ENCODE measurements at regions of chr17 and their contacts with region 1.

Region 1: DNA sequence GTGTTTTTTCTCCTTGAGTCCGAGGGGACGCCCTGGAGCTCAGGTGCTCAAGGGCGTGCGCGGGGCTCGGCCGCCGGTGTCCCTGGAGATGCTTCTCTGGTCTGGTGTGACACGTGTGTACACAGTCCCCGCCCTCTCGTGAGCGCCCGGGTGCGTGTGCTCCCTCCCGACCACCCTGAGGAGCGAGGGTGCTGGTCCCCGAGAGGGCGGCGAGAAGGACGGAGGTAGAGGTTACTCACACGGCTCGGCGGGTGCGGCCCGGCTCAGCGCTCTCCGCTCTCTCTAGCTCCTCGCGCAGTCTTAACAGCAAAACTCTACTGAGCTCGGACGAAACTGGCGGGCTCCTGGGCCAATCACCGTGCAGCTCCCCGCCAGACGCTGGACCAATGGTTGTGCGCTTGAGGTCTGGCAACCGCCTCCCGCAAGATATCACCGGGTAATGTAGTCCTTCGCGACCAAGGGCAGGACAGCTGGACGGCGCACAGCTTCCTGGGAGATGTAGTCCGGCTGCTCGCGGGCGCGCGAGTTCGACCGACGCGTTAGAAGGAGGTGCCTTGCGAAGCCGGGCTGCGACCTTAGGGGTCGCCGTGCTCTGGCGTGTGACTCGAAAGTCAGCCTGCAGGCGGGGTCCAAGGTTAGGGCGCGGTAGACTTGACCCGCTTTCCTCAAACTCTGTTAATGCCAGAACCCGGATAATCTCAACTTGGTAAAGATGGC is at the start of gene SLC25A19:
- DNase-seq: peak; percentile 99
- H3K4me3 Mint-ChIP-seq: peak within 1 kb of the TSS; percentile 96
- H3K27ac Mint-ChIP-seq: peak within 1 kb of the TSS; percentile 100
- H3K4me1 Mint-ChIP-seq: peaks cover 21% of the 10 kb centered on the region
- H3K27me3 Mint-ChIP-seq: no peaks in the 10 kb centered on the region
- total RNA-seq, gene SLC25A19: 57.9 to 62.3 TPM

Region 2: DNA sequence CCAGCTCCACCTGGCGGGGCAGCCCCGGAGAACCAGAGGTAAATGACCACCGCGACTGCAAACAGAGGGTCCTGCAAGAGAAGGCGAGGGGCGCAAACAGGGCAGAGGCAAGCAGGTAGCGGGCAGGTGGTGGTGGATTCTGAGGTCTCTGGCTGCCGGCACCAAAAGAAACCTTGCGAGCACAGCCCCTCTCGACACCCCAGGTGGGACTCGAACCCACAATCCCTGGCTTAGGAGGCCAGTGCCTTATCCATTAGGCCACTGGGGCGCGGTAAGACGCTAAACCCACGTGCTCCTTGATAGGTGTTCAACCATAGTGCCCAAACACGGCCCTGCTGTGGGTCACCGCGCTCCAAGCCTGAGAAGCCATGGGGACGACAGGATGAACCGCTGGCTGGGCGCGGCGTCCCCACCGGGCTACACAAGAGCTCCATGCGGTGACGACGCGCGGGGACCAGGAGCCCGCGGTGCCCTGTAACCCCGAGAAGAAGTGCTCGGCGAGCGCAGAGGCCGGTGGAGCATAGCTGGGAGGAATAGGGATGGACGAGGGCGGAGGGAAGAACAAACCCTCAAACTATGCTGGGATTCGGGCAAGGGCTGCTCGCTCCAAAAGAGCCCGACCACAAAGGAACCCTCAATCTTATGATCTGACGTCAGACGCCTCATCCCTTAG is 254.9 kb before region 1 on chr17:
- CTCF ChIA-PET with region 1: no interaction called
- POLR2A ChIA-PET with region 1: no interaction called
- intact Hi-C with region 1: loop called (anchors 1 kb)
- DNase-seq: peak; percentile 95
- H3K4me3 Mint-ChIP-seq: peak overlapping the region; percentile 97
- H3K27ac Mint-ChIP-seq: peak overlapping the region; percentile 96
- H3K4me1 Mint-ChIP-seq: peaks cover 49% of the 10 kb centered on the region
- H3K27me3 Mint-ChIP-seq: peaks cover 4% of the 10 kb centered on the region

Region 3: DNA sequence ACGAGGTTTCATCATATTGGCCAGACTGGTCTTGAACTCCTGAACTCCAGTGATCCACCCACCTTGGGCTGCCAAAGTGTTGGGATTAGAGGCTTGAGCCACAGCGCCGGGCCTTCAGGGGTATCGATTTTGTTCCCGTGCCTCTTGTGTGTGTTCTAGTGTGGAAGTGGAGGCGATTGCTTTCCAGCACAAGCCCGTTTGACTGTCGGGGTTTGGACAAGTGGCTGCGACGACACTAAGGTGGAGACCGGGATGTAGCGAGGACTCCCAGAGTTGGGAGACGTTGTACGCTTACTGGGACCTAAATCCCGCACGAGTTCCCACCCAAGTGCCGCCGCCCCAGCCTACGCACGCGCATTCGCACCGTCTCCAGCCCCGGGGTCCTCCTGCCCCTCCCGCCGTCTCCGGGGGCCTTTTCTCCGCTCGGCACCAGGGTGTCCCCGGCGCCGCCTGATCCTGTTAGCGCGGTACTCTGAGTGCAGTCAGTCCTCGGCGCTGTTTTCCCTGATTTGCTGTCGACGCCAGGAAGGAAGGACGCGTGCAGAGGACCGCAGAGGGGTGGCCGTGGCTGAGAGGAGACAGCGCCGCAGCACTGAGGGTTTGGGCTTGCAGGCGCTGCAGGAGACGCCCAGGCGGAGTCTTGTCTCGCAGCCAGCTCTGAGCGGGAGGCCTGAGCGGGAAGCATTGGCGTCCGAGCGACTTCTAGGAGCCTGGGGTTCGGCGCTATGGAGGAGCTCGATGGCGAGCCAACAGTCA is 84.1 kb before region 1 on chr17 and contains the start of gene NUP85:
- CTCF ChIA-PET with region 1: no interaction called
- POLR2A ChIA-PET with region 1: no interaction called
- intact Hi-C with region 1: loop called (anchors 1 kb)
- DNase-seq: peak; percentile 95
- H3K4me3 Mint-ChIP-seq: peak within 1 kb of the TSS; percentile 81
- H3K27ac Mint-ChIP-seq: peak within 1 kb of the TSS; percentile 89
- H3K4me1 Mint-ChIP-seq: peaks cover 18% of the 10 kb centered on the region
- H3K27me3 Mint-ChIP-seq: no peaks in the 10 kb centered on the region
- total RNA-seq, gene NUP85: 125 to 132 TPM

Region 4: GRCh38 chr17:75261336-75262111 is 27.7 kb before region 1 on chr17 and contains the starts of genes GGA3 and MRPS7:
- CTCF ChIA-PET with region 1: interaction called, 21 read pairs
- POLR2A ChIA-PET with region 1: interaction called, 35 read pairs
- intact Hi-C with region 1: loop called (anchors 1 kb)
- DNase-seq: peak; percentile 96
- H3K4me3 Mint-ChIP-seq: peak within 1 kb of the TSS; percentile 93
- H3K27ac Mint-ChIP-seq: peak within 1 kb of the TSS; percentile 96
- H3K4me1 Mint-ChIP-seq: peaks cover 49% of the 10 kb centered on the region
- H3K27me3 Mint-ChIP-seq: no peaks in the 10 kb centered on the region
- total RNA-seq, gene GGA3: 68.5 to 70.7 TPM
- total RNA-seq, gene MRPS7: 72.9 to 76.1 TPM

Region 5: DNA sequence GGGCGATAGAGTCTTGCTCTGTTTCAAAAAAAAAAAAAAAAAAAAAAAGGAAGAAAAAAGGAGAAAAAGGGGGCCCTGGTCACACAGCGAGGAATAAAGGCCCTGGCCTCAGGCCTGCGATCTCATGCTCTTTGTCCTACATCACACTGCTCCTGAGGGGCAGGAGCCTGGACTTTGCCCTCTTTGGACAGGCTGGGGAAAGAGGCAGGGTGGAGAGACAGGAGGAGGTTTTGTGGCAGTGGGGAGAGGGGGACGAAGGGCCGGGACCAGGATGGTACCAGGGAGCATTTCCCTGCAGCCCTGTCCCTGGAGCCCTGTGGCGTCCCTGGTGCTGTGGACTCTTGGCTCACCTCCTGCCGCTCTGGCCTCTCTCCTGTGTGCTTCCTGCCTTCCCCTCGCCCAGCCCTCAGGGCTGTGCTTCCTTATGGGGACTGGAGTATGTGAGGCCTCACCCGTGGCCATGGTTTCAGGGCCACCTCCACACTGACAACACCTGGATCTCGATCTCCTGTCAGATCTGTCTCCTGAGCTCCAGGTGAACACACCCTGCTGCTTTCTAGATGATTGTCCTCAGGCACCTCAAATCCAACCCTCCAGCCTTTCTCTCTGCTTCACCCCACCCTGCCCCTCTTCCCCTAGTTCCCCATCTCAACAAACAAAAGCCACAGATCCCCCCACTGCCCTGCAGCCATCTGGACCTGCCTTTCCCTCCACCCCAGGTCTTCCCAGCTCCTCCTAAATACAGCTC is 19.9 kb after region 1 on chr17:
- CTCF ChIA-PET with region 1: no interaction called
- POLR2A ChIA-PET with region 1: no interaction called
- intact Hi-C with region 1: no loop called
- DNase-seq: no peak
- H3K4me3 Mint-ChIP-seq: no peak overlapping the region
- H3K27ac Mint-ChIP-seq: no peak overlapping the region
- H3K4me1 Mint-ChIP-seq: peaks cover 13% of the 10 kb centered on the region
- H3K27me3 Mint-ChIP-seq: no peaks in the 10 kb centered on the region

Region 6: GRCh38 chr17:75319904-75320691 is 30.8 kb after region 1 on chr17:
- CTCF ChIA-PET with region 1: interaction called, 9 read pairs
- POLR2A ChIA-PET with region 1: interaction called, 3 read pairs
- intact Hi-C with region 1: loop called (anchors 1 kb)
- DNase-seq: no peak
- H3K4me3 Mint-ChIP-seq: no peak overlapping the region
- H3K27ac Mint-ChIP-seq: peak overlapping the region; percentile 28
- H3K4me1 Mint-ChIP-seq: peaks cover 19% of the 10 kb centered on the region
- H3K27me3 Mint-ChIP-seq: no peaks in the 10 kb centered on the region

Region 7: DNA sequence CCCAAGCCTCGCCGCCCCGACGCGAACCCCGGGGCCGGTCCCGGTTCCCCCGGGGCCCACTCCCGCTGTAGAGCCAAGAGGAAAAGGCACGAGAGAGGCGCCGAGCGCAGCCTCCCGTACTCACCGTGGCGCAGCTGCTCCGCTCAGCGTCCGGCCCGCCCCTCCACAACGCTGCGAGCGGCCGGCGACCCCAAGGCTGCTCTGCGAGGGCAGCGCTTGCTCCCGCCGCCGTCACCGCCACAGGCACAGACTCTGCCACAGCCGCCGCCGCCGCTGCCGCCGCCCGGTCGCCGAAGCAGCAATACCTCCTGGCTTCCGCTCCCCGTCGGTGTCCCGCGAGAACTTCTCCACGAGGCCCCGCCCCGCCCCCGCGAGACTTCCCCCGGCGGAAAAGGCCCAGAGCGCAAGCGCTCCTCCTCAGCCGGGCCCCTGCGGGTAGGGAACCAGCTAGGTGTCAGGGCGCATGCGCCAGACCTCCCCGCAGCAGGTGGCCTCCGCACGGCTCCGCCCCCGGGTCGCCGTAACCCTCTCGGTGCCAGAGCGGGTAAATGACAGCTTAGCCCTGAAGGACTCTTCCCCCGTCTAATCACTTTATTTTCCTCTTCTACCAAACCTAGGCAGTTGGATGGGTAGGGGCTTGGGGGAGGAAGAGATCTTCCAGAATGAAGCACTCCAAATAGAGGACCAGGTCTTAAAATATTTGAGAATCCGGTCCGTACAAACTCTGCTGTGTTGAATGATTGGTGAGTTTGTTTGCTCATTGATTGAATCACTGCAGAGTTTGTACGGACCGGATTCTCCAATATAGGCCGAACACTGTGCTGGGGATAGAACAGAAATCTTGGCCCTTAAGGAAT is 116.3 kb after region 1 on chr17 and contains the start of gene GRB2:
- CTCF ChIA-PET with region 1: interaction called, 13 read pairs
- POLR2A ChIA-PET with region 1: interaction called, 15 read pairs
- intact Hi-C with region 1: loop called (anchors 1 kb)
- DNase-seq: peak; percentile 100
- H3K4me3 Mint-ChIP-seq: peak within 1 kb of the TSS; percentile 89
- H3K27ac Mint-ChIP-seq: peak within 1 kb of the TSS; percentile 95
- H3K4me1 Mint-ChIP-seq: peaks cover 31% of the 10 kb centered on the region
- H3K27me3 Mint-ChIP-seq: no peaks in the 10 kb centered on the region
- total RNA-seq, gene GRB2: 174 to 182 TPM

Region 8: DNA sequence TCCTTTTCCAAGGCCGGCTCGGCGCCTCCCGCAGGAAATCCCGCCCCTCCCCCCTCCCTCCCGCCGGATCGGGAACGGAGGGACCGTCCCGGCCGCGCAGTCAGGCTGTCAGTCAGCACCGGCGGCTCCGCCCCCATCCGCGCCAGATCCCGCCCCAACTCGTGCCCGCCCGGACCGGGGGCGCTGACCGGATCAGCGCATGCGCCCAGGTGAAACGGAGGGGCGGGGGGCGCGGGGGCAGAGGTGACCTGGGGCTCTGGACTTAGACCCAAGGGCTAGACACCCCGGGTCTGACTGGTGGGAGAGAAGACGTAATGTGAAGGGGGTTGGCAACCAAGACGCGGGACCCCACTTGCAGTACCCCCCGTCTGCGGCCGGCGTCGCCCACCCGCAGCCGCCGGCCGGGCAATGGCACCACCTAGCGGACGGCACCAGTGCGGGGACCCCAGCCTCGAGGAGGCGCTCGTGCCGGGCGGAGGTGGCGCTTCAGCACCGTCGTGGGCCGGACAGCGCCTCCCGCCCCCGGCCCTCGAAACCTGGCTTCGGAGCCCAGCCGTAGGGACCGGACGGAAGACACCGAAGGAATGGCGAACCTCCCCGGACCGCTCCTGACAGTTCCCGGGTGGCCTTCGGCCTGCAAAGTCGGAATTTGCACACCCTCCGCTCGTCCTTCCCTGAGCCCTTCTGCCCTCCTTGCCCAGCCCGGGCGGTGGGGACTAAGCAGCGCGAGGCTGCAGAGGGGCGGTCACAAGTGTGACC is 226.4 kb after region 1 on chr17 and contains the start of gene CASKIN2:
- CTCF ChIA-PET with region 1: interaction called, 5 read pairs
- POLR2A ChIA-PET with region 1: no interaction called
- intact Hi-C with region 1: loop called (anchors 5 kb)
- DNase-seq: peak; percentile 91
- H3K4me3 Mint-ChIP-seq: peak within 1 kb of the TSS; percentile 57
- H3K27ac Mint-ChIP-seq: no peak within 1 kb of the TSS
- H3K4me1 Mint-ChIP-seq: peaks cover 17% of the 10 kb centered on the region
- H3K27me3 Mint-ChIP-seq: peaks cover 4% of the 10 kb centered on the region
- total RNA-seq, gene CASKIN2: 4.7 to 5.3 TPM

Measured in activated CD4-positive, alpha-beta memory T cell treated with anti-CD3 and anti-CD28 coated beads for 36 hours (primary cell).